ENCODE measurements at regions of chr22 and their contacts with region 1.

Region 1: DNA sequence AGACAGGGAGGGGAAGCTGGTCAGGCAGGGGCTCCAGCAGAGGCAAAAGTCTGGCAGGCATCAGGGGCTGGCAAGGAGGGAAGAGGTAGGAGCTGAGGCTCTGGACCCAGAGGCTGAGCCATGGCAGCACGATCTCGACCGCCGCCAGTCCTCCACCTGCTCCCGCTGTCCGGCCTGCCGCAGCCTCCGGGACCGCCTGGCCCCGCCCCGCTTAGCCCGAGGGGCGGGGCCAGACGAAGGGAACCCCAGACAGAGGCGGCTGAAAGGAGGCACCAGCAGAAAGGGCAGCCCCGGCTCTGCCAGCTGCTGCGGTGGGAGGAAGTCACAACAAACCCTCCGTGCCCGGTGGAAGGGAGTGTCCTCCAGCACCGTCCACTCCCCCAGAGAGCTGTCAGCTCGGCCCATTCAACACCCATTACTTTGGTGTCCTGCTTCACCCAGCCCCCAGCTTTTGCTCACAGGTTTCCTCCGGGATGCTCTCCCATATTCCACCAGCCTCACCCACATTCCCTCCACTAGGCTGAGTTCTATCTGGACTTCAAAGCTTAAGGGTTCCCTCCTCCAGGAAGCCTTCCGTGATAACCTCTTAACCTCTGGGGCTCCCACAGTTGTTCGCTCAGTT is at the start of gene MFNG:
- DNase-seq: peak; percentile 89
- ATAC-seq: peak; percentile 70
- H3K4me3 Mint-ChIP-seq: peak within 1 kb of the TSS; percentile 92
- H3K27ac Mint-ChIP-seq: peak within 1 kb of the TSS; percentile 92
- H3K4me1 Mint-ChIP-seq: peaks cover 64% of the 10 kb centered on the region
- H3K27me3 Mint-ChIP-seq: no peaks in the 10 kb centered on the region
- total RNA-seq, gene MFNG: 108 to 125 TPM

Region 2: GRCh38 chr22:37498289-37498909 is 12.1 kb after region 1 on chr22:
- CTCF ChIA-PET with region 1: interaction called, 8 read pairs
- POLR2A ChIA-PET with region 1: no interaction called
- intact Hi-C with region 1: loop called in 1 of 2 experiments (anchors 1 kb)
- DNase-seq: peak; percentile 84
- ATAC-seq: peak; percentile 98
- H3K4me3 Mint-ChIP-seq: no peak overlapping the region
- H3K27ac Mint-ChIP-seq: no peak overlapping the region
- H3K4me1 Mint-ChIP-seq: peaks cover 15% of the 10 kb centered on the region
- H3K27me3 Mint-ChIP-seq: no peaks in the 10 kb centered on the region

Region 3: GRCh38 chr22:37538590-37539357 is 52.4 kb after region 1 on chr22:
- CTCF ChIA-PET with region 1: no interaction called
- POLR2A ChIA-PET with region 1: no interaction called
- intact Hi-C with region 1: loop called in 1 of 2 experiments (anchors 5 kb)
- DNase-seq: peak; percentile 97
- ATAC-seq: peak; percentile 92
- H3K4me3 Mint-ChIP-seq: no peak overlapping the region
- H3K27ac Mint-ChIP-seq: peak overlapping the region; percentile 55
- H3K4me1 Mint-ChIP-seq: peaks cover 39% of the 10 kb centered on the region
- H3K27me3 Mint-ChIP-seq: peaks cover 12% of the 10 kb centered on the region

Region 4: DNA sequence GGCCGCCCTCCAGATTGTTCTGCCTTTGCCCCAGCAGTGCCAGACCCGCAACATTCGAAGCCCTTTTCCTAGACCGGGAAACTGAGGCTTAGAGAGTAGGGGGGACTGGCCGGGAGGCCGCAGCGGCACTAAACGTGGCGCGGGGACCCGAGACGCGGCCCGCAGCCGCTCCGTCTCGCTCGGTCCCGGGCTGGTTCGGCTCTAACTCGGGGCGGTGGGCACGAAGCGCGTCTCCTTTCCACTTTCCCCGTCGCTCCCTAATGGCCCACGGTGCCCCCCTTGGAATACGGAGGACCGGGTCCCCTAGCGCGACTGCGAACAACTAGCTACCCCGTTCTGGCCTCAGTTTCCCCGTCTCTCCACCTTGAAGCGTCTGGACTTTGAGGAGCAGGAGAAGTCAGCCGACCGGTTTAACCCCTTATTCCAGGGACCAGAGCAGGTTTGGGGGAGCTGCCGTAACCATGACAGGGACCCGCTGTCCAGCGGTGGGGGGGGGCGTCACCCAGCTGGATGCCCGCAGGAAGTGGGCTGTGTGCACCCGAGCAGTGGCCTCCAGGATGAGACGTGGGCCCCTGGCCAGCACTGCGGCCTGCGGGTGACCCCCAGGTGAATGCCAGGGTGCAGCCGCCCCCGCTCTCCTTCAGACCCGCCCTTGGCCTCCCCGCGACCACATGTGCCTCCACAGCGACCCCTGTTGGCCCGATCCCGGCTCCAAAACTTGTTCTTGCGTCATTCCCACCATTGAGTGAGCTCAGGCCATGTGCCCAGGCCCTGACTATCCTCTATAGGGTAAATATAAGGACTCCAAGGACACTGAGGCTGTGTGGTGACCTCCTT is 75.1 kb after region 1 on chr22:
- CTCF ChIA-PET with region 1: interaction called, 3 read pairs
- POLR2A ChIA-PET with region 1: interaction called, 5 read pairs
- intact Hi-C with region 1: loop called in 1 of 2 experiments (anchors 2 kb)
- DNase-seq: peak; percentile 92
- ATAC-seq: peak; percentile 71
- H3K4me3 Mint-ChIP-seq: peak overlapping the region; percentile 57
- H3K27ac Mint-ChIP-seq: peak overlapping the region; percentile 51
- H3K4me1 Mint-ChIP-seq: peaks cover 20% of the 10 kb centered on the region
- H3K27me3 Mint-ChIP-seq: peaks cover 45% of the 10 kb centered on the region

Region 5: GRCh38 chr22:37870273-37870672 is 383.9 kb after region 1 on chr22:
- CTCF ChIA-PET with region 1: no interaction called
- POLR2A ChIA-PET with region 1: no interaction called
- intact Hi-C with region 1: no loop called
- DNase-seq: no peak
- ATAC-seq: no peak
- H3K4me3 Mint-ChIP-seq: no peak overlapping the region
- H3K27ac Mint-ChIP-seq: no peak overlapping the region
- H3K4me1 Mint-ChIP-seq: no peaks in the 10 kb centered on the region
- H3K27me3 Mint-ChIP-seq: no peaks in the 10 kb centered on the region

Measured in activated CD4-positive, alpha-beta T cell treated with anti-CD3 and anti-CD28 coated beads for 36 hours (primary cell).